Common myeloid progenitor, CD34-positive (primary cell): ENCODE measurements at regions of chr13 and their contacts with region 1.

Region 1: GRCh38 chr13:52665325-52665724 is 12.7 kb downstream of the SUGT1 start:
- DNase-seq: peak; percentile 46 to 71 (median 67)
- H3K4me3 ChIP-seq: no peak overlapping the region
- H3K27ac ChIP-seq: no peak overlapping the region
- H3K4me1 ChIP-seq: no peaks in the 10 kb centered on the region
- H3K27me3 ChIP-seq: no peaks in the 10 kb centered on the region

Region 2: DNA sequence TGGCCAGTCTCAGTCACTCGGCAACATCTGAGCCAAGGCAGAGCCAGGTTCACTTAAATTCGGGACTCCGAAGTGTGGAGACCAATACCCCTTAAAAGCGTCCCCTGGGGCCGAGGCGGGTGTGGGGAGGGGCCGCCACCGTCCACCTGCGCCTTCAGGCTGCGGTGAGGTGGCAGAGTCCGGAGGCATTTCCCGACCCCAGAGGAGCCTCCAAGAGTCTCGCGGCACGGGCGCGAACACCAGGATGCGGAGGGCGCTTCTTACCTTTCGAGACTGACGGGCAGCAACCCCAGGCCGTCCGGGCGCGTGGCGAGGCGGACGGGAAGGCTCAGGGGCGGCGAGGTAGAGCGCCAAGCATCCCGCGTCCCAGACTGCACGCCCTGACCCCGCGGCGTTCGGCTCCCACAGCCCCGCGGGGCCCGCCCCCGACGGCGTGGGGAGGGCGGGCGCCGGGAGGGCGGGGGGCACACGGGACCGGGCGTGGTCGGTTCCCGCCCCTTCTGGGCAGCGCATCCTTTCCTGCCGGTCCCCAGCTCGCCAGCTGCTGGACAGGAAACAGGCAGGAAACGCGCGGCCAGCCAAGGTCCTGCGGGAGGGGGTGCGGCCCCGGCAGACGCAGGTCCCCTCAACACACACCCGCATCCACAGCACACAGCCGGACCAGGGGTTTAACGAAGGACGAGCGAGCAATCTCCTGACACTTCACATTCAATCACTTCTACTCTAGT is 259.4 kb before region 1 on chr13 and contains the start of gene THSD1:
- CTCF ChIA-PET with region 1: no interaction called
- POLR2A ChIA-PET with region 1: no interaction called
- DNase-seq: peak in 2 of 3 donors; percentile 29 to 45
- H3K4me3 ChIP-seq: peak within 1 kb of the TSS; percentile 41 to 78 (median 65)
- H3K27ac ChIP-seq: no peak within 1 kb of the TSS
- H3K4me1 ChIP-seq: peaks cover 0 to 23% (median 22%) of the 10 kb centered on the region in 4 experiments
- H3K27me3 ChIP-seq: peaks cover 3 to 16% (median 5%) of the 10 kb centered on the region in 5 experiments

Region 3: DNA sequence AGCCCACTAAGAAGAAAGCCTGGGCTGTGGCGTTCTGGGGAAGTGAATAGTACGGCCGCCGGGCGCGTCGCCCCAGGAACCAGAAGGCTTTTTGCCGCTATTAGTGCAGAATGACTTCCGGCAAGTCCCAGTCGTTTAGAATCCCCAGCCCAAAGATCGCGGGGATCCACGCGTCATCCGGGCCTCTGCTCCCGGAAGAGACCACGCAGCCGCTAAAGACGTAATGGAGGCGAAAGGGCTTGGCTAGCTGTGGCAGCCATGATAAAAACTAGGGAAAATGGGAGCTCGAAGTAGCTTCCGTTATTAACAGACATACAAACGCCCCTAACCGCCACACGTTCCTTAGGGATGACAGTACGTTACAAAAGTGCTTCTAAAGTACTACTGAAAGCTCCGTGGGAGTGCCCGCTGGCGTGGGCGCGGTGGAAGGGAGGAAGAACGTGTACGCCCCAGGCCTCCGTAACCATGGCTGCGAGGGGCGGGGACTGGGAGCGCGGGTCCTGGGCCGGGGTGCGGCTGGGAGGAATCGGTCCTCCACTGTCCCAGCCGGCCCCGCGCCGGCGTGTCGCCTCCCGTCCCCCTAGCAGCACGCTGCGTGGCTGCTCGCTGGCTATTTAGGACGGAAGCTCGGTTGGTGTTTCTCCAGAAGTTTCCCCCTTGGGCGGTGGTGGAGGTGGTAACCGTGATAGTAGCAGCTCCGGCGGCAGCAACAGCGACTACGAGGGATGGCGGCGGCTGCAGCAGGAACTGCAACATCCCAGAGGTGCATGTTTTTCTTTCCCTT is 12.9 kb before region 1 on chr13 and contains the start of gene SUGT1:
- CTCF ChIA-PET with region 1: interaction called, 26 read pairs
- POLR2A ChIA-PET with region 1: interaction called, 4 read pairs
- DNase-seq: peak; percentile 98 to 100 (median 99)
- H3K4me3 ChIP-seq: peak within 1 kb of the TSS; percentile 87 to 98 (median 93)
- H3K27ac ChIP-seq: peak within 1 kb of the TSS; percentile 99 to 100
- H3K4me1 ChIP-seq: peaks cover 15 to 28% (median 17%) of the 10 kb centered on the region in 4 experiments
- H3K27me3 ChIP-seq: no peaks in the 10 kb centered on the region

Region 4: DNA sequence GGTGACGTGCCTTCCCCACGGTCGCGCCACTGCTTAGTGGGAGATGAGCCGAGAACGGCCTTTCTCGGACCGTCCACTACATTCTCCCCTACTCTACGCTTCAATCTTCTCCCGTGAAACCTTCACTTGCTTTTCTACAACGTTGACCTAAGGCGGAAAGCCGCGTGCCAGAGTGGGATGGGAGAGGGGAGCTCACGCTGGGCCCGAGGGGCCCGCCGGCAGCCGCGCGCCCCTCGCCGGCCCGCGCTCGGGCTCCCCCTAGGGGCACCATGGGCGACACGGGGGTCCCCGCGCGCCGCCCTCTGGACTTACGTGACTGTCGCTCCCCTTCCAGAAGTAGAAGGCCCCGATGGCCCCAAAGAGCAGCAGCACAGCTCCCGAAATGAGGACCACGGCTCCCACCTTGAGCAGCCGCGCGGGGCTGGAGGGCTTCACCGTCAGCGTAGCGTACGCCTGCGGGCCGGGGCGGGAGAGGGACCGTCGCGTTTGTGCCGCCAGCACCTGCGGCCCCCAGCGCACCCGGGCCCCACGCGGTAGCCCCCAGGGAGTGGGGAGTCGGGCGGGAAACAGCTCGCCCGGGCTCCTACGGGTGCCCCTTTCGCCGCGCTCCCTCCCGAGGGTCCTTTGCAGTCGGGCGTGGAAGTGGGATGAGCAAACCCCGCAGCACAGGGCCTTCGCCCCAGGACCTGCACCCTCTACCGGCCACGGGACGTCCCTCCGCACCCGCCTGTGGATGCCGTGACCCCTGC is 73.6 kb after region 1 on chr13:
- CTCF ChIA-PET with region 1: interaction called, 32 read pairs
- POLR2A ChIA-PET with region 1: no interaction called
- DNase-seq: peak; percentile 58 to 75 (median 68)
- H3K4me3 ChIP-seq: peak overlapping the region; percentile 34 to 84 (median 62)
- H3K27ac ChIP-seq: no peak overlapping the region
- H3K4me1 ChIP-seq: peaks cover 0 to 16% (median 9%) of the 10 kb centered on the region in 4 experiments
- H3K27me3 ChIP-seq: peaks cover 0 to 22% (median 18%) of the 10 kb centered on the region in 5 experiments

Region 5: DNA sequence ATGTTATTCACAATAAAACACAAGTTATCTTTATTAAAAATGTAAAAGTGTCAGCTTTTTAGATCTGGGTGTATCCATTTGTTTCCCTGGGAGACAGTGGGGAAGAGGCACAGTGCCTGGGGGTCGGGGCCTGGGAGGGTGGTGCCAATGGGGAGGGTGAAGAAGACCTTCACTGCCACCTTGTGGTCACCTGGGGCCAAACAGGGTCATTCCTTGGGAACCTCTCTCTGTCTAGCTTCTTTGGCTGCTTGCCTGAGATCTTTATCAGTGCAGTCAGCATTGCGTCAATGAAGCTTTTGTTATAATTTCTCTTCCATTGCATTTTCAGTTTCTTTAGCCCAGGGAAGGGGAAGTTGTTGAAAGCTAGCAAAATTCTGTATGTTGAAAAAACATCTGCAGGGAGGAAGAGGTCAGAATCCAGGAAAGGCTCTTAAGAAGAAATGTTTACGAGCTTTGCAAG is 144.0 kb after region 1 on chr13:
- CTCF ChIA-PET with region 1: interaction called, 17 read pairs
- POLR2A ChIA-PET with region 1: no interaction called
- DNase-seq: peak; percentile 95 to 97 (median 95)
- H3K4me3 ChIP-seq: peak overlapping the region in 1 of 7 experiments; percentile 2
- H3K27ac ChIP-seq: no peak overlapping the region
- H3K4me1 ChIP-seq: peaks cover 5 to 14% (median 8%) of the 10 kb centered on the region in 4 experiments
- H3K27me3 ChIP-seq: no peaks in the 10 kb centered on the region